HEK293 (cell line): ENCODE measurements at regions of chr3 and their contacts with region 1.

Region 1: DNA sequence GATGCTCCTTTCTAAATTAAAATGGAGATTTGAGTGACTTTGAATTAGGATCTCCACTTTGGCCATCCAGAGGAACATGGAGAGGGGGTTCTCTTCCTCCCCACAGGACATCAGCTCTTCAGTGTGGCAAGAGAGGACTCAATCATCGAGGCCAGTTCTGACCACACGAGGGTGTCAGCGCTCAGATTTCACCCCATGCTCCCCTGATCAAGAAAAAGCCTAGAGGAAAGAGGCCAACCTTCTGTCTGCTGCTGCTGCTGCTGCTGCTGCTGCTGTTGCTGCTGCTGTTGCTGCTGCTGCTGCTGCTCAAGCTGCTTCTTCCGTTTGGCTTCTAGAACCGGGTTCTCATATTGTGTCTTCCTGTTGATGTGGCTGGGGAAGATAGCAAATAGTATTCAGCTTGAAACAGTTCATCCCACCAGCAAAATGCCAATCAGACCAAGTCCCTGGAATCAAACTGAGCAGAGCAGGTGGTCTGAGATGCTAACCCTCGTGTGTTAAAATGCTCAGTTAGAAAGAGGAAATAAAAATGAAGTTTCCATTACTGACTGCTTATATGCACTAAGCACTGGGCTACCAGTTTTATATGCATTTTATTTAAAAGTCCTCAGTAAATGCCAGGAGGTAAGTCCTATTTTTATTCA is 599.0 kb downstream of the MAGI1 start:
- H3K4me3 ChIP-seq: no peak overlapping the region
- H3K27ac ChIP-seq: no peak overlapping the region
- H3K4me1 ChIP-seq: no peaks in the 10 kb centered on the region
- CTCF ChIP-seq: 0 out of 2 replicates have a peak, but pooled peaks have one; percentile 31

Region 2: GRCh38 chr3:64533617-64534317 is 906.0 kb before region 1 on chr3:
- CTCF ChIA-PET with region 1: interaction called, 10 read pairs
- POLR2A ChIA-PET with region 1: no interaction called
- H3K4me3 ChIP-seq: no peak overlapping the region
- H3K27ac ChIP-seq: no peak overlapping the region
- H3K4me1 ChIP-seq: no peaks in the 10 kb centered on the region
- CTCF ChIP-seq: peak; percentile 77

Region 3: DNA sequence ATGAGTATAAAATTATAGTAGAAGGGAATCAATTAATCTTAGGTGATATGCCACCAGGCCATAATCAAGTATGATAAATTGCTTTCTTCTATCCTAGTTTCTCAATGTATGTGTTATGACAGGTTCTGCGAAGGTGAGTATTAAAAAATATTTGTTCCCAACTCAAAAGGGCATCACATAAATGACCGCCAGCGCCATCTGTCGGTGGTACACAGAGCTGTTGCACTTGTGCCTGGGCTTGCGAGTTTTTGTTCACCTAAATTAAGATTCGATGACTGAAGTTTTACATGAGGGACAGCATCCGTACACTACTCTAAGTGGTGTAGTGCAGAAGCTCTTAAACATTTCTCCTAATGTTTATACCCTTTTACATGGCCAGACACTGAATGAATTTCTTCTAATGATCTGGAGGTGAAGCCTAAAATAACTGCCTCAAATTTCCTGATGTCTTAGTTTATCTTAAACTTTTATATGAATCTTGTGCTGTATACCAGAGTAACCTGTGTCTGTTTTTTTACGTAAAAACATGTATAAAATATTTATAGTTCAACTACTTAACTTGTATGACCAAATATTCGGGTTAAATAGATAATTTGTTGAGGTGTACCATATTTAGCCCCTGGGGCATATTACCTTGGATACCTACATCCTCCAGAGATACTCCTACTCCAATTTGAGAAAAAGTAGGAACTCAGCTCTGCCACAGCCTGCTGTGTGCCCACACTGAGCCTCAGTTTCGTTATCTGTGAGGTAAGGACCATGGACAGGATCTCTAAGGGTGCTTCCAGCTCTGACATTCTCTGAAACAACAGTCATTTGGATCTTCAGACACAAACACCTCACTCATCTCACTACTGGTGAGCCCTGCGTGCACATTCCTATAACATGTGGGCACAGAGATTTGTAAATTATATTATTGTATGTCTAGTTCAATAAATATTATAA is 233.4 kb after region 1 on chr3:
- CTCF ChIA-PET with region 1: interaction called, 41 read pairs
- POLR2A ChIA-PET with region 1: no interaction called
- H3K4me3 ChIP-seq: no peak overlapping the region
- H3K27ac ChIP-seq: no peak overlapping the region
- H3K4me1 ChIP-seq: no peaks in the 10 kb centered on the region
- CTCF ChIP-seq: 0 out of 2 replicates have a peak, but pooled peaks have one; percentile 29

Region 4: DNA sequence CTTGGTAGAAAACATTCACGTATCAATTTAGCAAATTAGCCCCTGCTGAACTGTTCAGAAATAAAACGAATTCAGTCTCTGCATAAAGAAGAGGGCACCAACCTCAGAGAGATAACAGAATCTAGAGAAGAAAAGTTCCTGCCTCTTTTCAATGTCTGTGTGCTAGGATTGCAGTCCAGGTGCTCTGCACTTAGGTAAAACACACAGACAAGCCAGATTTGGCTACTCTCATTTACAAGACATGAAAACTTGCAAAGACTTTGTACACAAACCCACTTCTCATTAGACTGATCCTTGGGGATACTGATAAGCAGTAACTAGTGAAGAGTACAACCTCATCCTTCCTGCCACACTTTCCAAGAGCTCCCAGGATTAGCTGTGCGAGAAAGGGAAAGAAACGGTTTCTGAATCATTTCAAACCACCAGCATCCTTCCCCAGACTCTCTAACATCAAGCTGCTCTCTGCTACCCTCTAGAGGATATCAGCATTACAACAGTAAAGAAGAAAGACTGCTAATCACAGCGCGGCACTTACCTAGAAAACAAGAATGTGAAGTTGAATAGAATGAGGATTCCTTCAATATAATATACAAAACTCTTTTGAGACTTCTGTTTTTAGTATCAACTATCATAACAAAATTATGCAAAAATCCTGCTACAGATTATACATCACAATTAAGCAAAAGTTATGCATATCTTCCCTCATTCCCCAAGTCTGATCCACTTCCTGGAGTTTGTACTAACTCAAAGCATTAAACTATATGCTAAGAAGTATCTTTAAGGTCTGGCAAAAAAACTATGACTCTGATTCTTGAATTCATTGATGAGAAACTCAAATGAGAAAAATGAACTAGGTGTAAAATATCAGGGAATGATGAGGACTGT is 292.5 kb after region 1 on chr3:
- CTCF ChIA-PET with region 1: interaction called, 18 read pairs
- POLR2A ChIA-PET with region 1: no interaction called
- H3K4me3 ChIP-seq: no peak overlapping the region
- H3K27ac ChIP-seq: no peak overlapping the region
- H3K4me1 ChIP-seq: no peaks in the 10 kb centered on the region
- CTCF ChIP-seq: no peak

Region 5: DNA sequence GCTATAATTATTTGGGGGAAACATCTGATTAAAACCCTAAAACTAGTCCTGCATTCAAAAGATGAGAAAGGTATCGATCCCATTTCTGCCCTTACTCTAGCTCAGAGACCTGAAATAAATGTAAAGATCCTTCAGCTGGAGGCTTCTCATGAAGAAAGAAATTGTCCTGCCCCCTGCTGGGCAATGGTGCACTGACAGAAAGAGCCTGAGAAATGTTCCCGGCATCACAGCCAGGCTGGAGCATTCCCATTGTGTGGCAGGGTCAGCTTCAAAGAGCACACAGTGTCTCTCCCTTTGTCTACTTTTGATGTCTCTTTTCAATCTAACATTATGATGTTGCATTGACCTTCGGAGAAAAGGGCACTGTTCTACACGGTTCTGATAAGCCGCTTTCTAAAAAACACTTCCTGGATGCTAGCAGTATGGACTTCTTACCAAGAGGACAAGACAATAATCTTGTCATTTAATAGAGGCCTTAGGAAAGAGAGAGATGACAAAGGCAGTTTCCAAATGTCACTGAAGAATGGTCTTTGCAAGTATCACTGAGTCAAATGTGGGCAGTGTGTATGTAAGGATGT is 311.4 kb after region 1 on chr3:
- CTCF ChIA-PET with region 1: interaction called, 10 read pairs
- POLR2A ChIA-PET with region 1: no interaction called
- H3K4me3 ChIP-seq: no peak overlapping the region
- H3K27ac ChIP-seq: no peak overlapping the region
- H3K4me1 ChIP-seq: no peaks in the 10 kb centered on the region
- CTCF ChIP-seq: no peak